CD8-positive, alpha-beta T cell (primary cell): ENCODE measurements at regions of chr4 and their contacts with region 1.

Region 1: DNA sequence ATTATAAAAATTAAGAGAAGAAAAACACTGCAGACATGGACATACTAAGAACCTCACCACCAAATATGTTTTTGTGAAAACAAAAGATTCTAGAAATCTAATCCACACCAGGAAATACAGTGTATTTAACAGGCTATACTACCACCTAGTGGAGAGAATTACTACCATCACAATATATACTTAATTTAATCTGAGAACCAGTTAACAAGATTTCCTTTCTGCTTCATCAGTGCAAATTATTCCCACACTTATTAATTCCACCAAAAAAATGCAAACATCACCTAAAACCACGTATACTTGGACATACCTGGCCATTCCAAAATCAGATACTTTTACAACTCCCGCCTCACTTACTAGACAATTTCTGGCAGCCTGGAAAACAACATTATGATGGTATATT is 7.0 kb upstream of the TXK start:
- DNase-seq: peak in 2 of 9 experiments; percentile 63 to 74
- ATAC-seq: peak; percentile 27
- H3K4me3 ChIP-seq: no peak overlapping the region
- H3K4me3 Mint-ChIP-seq: no peak overlapping the region
- H3K27ac ChIP-seq: no peak overlapping the region
- H3K27ac Mint-ChIP-seq: no peak overlapping the region
- H3K4me1 ChIP-seq: peaks cover 47% of the 10 kb centered on the region
- H3K4me1 Mint-ChIP-seq: peaks cover 51% of the 10 kb centered on the region
- H3K27me3 ChIP-seq: no peaks in the 10 kb centered on the region
- H3K27me3 Mint-ChIP-seq: no peaks in the 10 kb centered on the region
- CTCF ChIP-seq: peak; percentile 72

Region 2: GRCh38 chr4:47326032-47326431 is 815.0 kb before region 1 on chr4:
- CTCF ChIA-PET with region 1: no interaction called
- POLR2A ChIA-PET with region 1: no interaction called
- intact Hi-C with region 1: no loop called
- DNase-seq: no peak
- ATAC-seq: no peak
- H3K4me3 ChIP-seq: no peak overlapping the region
- H3K4me3 Mint-ChIP-seq: no peak overlapping the region
- H3K27ac ChIP-seq: no peak overlapping the region
- H3K27ac Mint-ChIP-seq: no peak overlapping the region
- H3K4me1 ChIP-seq: no peaks in the 10 kb centered on the region
- H3K4me1 Mint-ChIP-seq: no peaks in the 10 kb centered on the region
- H3K27me3 ChIP-seq: no peaks in the 10 kb centered on the region
- H3K27me3 Mint-ChIP-seq: peaks cover 17% of the 10 kb centered on the region
- CTCF ChIP-seq: no peak

Region 3: GRCh38 chr4:47463235-47463956 is 677.7 kb before region 1 on chr4 and contains the start of gene COMMD8:
- CTCF ChIA-PET with region 1: no interaction called
- POLR2A ChIA-PET with region 1: no interaction called
- intact Hi-C with region 1: loop called in 1 of 2 experiments (anchors 5 kb)
- DNase-seq: peak; percentile 95 to 99 (median 97)
- ATAC-seq: peak; percentile 86
- H3K4me3 ChIP-seq: peak within 1 kb of the TSS; percentile 71 to 85
- H3K4me3 Mint-ChIP-seq: peak within 1 kb of the TSS; percentile 88
- H3K27ac ChIP-seq: peak within 1 kb of the TSS; percentile 73 to 81
- H3K27ac Mint-ChIP-seq: peak within 1 kb of the TSS; percentile 86
- H3K4me1 ChIP-seq: peaks cover 12% of the 10 kb centered on the region
- H3K4me1 Mint-ChIP-seq: peaks cover 43% of the 10 kb centered on the region
- H3K27me3 ChIP-seq: no peaks in the 10 kb centered on the region
- H3K27me3 Mint-ChIP-seq: peaks cover 2% of the 10 kb centered on the region
- CTCF ChIP-seq: no peak
- total RNA-seq, gene COMMD8: 4.6 to 6.3 TPM

Region 4: GRCh38 chr4:47926639-47927258 is 214.3 kb before region 1 on chr4:
- CTCF ChIA-PET with region 1: interaction called, 3 read pairs
- POLR2A ChIA-PET with region 1: no interaction called
- intact Hi-C with region 1: loop called (anchors 5 kb)
- DNase-seq: peak; percentile 21 to 70 (median 51)
- ATAC-seq: peak; percentile 97
- H3K4me3 ChIP-seq: no peak overlapping the region
- H3K4me3 Mint-ChIP-seq: peak overlapping the region; percentile 44
- H3K27ac ChIP-seq: no peak overlapping the region
- H3K27ac Mint-ChIP-seq: no peak overlapping the region
- H3K4me1 ChIP-seq: peaks cover 6% of the 10 kb centered on the region
- H3K4me1 Mint-ChIP-seq: peaks cover 8% of the 10 kb centered on the region
- H3K27me3 ChIP-seq: no peaks in the 10 kb centered on the region
- H3K27me3 Mint-ChIP-seq: peaks cover 24% of the 10 kb centered on the region
- CTCF ChIP-seq: peak; percentile 61

Region 5: GRCh38 chr4:48002267-48002666 is 138.8 kb before region 1 on chr4:
- CTCF ChIA-PET with region 1: interaction called, 6 read pairs
- POLR2A ChIA-PET with region 1: no interaction called
- intact Hi-C with region 1: loop called in 1 of 2 experiments (anchors 2 kb)
- DNase-seq: no peak
- ATAC-seq: no peak
- H3K4me3 ChIP-seq: no peak overlapping the region
- H3K4me3 Mint-ChIP-seq: no peak overlapping the region
- H3K27ac ChIP-seq: no peak overlapping the region
- H3K27ac Mint-ChIP-seq: no peak overlapping the region
- H3K4me1 ChIP-seq: no peaks in the 10 kb centered on the region
- H3K4me1 Mint-ChIP-seq: no peaks in the 10 kb centered on the region
- H3K27me3 ChIP-seq: no peaks in the 10 kb centered on the region
- H3K27me3 Mint-ChIP-seq: peaks cover 8% of the 10 kb centered on the region
- CTCF ChIP-seq: no peak

Region 6: DNA sequence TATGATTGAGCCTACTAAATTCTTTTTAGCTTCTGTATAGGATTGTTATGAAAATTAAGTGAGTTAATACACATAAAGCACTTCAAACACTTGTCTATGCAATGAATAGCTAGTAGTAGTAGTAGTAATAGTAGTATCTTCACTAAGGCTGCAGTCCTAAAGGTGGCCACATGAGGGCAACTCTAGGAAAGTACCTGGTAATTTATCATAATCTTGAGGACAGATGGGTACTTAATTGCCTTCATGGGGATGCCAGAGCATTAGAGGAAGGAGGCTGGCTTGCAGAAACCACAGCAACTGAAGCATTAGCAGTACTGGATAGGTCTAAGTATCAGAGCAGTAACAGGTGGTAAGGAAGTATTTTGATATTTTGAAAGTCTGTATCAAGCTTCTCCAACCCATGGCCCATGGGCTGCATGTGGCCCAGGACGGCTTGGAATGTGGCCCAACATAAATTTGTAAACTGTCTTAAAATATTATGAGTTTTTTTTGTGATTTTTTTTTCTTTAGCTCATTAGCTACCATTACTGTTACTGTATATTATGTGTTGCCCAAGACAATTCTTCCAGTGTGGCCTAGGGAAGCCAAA is 107.1 kb before region 1 on chr4:
- CTCF ChIA-PET with region 1: interaction called, 51 read pairs
- POLR2A ChIA-PET with region 1: no interaction called
- intact Hi-C with region 1: loop called (anchors 1 kb)
- DNase-seq: peak; percentile 36 to 76 (median 66)
- ATAC-seq: peak; percentile 96
- H3K4me3 ChIP-seq: no peak overlapping the region
- H3K4me3 Mint-ChIP-seq: no peak overlapping the region
- H3K27ac ChIP-seq: no peak overlapping the region
- H3K27ac Mint-ChIP-seq: no peak overlapping the region
- H3K4me1 ChIP-seq: no peaks in the 10 kb centered on the region
- H3K4me1 Mint-ChIP-seq: peaks cover 4% of the 10 kb centered on the region
- H3K27me3 ChIP-seq: no peaks in the 10 kb centered on the region
- H3K27me3 Mint-ChIP-seq: no peaks in the 10 kb centered on the region
- CTCF ChIP-seq: peak; percentile 82

Region 7: DNA sequence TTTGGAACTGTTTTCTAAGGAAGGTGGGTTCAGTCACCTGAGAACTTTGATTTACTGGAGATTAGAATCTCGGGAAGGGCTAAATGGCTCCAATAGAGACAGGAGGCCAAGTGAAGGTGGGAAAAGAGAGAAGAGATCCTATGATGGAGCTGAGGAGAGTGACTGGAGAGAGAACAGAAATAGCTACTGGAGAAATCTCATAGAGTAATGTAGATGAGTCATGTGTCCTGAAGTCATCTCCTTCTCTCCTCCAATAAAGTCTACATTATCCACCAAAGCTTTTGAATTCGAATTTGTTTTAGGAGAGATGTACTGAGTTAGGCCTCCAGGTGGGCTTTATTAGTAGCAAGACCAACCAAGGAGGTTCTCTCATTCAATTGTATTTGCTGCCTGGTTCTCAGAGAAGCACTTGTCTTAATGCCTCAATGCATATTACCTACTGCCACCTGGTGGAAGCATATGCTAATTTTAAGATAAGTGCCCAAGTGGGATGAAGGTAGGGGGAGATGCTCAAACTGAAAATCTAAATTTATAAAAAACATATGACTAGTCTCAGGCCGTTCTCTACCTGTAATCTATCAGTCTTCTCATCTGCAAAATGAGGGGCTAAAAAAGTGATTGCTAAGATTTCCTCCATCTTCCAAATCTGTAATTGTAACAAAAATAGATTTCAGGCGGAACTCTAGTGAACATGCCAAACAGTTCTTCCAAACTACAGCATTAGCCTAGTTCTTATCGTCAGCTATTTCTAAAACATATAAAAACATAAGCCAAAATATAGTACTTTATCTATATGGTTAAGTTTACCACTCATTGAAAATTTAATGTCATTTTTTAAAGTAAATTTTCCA is 31.4 kb before region 1 on chr4:
- CTCF ChIA-PET with region 1: interaction called, 34 read pairs
- POLR2A ChIA-PET with region 1: interaction called, 8 read pairs
- intact Hi-C with region 1: loop called (anchors 1 to 2 kb)
- DNase-seq: peak in 3 of 9 experiments; percentile 29 to 74 (median 65)
- ATAC-seq: peak; percentile 82
- H3K4me3 ChIP-seq: no peak overlapping the region
- H3K4me3 Mint-ChIP-seq: no peak overlapping the region
- H3K27ac ChIP-seq: no peak overlapping the region
- H3K27ac Mint-ChIP-seq: peak overlapping the region; percentile 75
- H3K4me1 ChIP-seq: peaks cover 34% of the 10 kb centered on the region
- H3K4me1 Mint-ChIP-seq: peaks cover 56% of the 10 kb centered on the region
- H3K27me3 ChIP-seq: no peaks in the 10 kb centered on the region
- H3K27me3 Mint-ChIP-seq: no peaks in the 10 kb centered on the region
- CTCF ChIP-seq: peak; percentile 67

Region 8: DNA sequence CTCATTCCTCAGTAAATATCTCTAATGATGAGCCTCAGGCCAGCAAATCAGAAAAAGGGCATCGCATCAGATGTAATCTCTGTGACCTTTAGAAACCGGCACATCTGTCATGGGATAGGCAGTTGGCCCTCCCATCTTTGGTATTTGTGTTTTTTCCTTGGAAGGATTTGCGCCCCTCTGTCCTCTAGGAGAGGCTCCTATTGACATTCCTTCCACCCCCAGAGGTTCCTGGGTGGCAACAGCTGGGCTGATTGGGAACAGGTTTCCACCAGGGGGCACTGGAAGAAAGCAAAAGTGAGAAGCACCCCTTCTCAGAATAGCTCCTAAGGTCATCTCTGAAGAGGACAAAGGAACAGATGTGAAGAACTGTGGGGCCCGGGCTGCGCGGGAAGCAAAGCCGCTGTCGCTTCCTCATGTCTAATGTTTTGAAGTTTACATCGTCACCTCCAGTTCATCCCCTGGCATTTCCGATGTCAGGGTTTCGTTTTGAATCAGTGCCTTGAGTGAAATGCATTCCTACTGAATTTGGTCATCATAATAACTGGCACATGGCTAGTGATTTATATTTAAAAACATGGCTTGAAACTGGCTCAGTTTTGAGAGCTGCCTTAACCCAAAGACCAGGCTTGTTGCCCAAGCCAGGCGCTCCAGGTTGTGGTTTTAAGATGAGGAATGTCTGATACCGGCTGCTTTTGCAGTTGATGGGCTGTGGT is 13.2 kb before region 1 on chr4:
- CTCF ChIA-PET with region 1: interaction called, 174 read pairs
- POLR2A ChIA-PET with region 1: interaction called, 77 read pairs
- intact Hi-C with region 1: loop called (anchors 1 kb)
- DNase-seq: peak; percentile 27 to 81 (median 73)
- ATAC-seq: peak; percentile 67
- H3K4me3 ChIP-seq: peak overlapping the region in 1 of 2 experiments; percentile 18
- H3K4me3 Mint-ChIP-seq: peak overlapping the region; percentile 91
- H3K27ac ChIP-seq: peak overlapping the region; percentile 33 to 67
- H3K27ac Mint-ChIP-seq: peak overlapping the region; percentile 92
- H3K4me1 ChIP-seq: peaks cover 76% of the 10 kb centered on the region
- H3K4me1 Mint-ChIP-seq: peaks cover 87% of the 10 kb centered on the region
- H3K27me3 ChIP-seq: no peaks in the 10 kb centered on the region
- H3K27me3 Mint-ChIP-seq: no peaks in the 10 kb centered on the region
- CTCF ChIP-seq: peak; percentile 59